Activated naive CD4-positive, alpha-beta T cell treated with anti-CD3 and anti-CD28 coated beads for 36 hours (primary cell): ENCODE measurements at regions of chr10 and their contacts with region 1.

Region 1: DNA sequence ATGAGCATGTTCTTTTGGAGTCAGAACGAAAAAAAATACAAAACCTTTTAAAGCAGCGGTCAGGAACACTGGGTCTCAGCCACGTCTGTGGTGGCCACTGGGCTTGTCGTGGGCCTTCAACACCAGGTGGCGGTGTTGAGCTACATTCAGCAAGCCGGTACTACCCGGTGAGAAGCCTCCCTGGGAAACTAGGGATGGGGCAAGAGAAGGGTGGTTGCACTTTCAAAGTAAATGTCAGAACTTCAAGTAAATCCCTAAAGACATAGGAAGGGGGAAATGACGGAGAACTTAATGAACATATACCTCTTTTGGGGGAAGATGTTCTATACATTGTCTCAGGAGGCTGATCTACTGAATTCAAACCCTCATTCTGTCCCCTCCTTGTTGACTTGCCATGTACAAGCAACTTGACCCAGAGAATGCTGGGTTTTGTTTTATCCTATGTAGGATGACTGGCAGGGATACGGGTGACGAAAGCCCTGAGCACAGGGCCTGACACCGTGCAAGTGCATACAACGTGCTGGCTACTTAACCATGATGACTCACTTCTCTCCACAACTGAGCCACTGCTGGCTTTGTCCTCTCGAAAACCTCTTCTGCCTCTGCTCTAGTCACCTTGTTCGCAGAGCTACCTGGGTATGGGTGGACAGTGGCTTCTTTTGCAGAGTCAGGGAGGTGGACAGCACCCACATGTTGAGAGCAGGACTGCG is 49.0 kb upstream of the BAMBI start:
- DNase-seq: peak; percentile 83
- H3K4me3 Mint-ChIP-seq: no peak overlapping the region
- H3K27ac Mint-ChIP-seq: no peak overlapping the region
- H3K4me1 Mint-ChIP-seq: peaks cover 4% of the 10 kb centered on the region
- H3K27me3 Mint-ChIP-seq: peaks cover 10% of the 10 kb centered on the region

Region 2: DNA sequence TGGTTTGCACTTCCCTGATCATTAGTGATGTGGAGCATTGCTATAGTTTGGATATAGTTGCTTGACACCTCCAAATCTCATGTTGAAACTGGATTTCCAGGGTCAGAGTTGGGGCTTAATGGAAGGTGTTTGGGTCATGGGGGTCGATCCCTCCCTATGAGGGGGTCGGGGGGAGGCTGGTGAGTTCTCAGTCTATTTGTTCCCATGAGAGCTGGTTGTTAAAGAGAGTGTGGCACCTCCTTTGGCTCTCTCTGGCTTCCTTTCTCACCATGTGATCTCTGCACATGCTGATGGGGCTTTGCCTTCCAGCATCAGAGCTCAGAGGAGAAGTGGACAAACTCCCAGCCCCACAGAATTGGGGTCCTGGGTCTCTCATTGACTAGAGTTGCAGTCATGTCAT is 12.2 kb after region 1 on chr10:
- CTCF ChIA-PET with region 1: interaction called, 12 read pairs
- intact Hi-C with region 1: no loop called
- DNase-seq: no peak
- H3K4me3 Mint-ChIP-seq: no peak overlapping the region
- H3K27ac Mint-ChIP-seq: no peak overlapping the region
- H3K4me1 Mint-ChIP-seq: no peaks in the 10 kb centered on the region
- H3K27me3 Mint-ChIP-seq: no peaks in the 10 kb centered on the region

Region 3: GRCh38 chr10:29304264-29305030 is 676.1 kb after region 1 on chr10:
- CTCF ChIA-PET with region 1: interaction called, 3 read pairs
- intact Hi-C with region 1: loop called (anchors 1 kb)
- DNase-seq: peak; percentile 53
- H3K4me3 Mint-ChIP-seq: peak overlapping the region; percentile 16
- H3K27ac Mint-ChIP-seq: no peak overlapping the region
- H3K4me1 Mint-ChIP-seq: peaks cover 4% of the 10 kb centered on the region
- H3K27me3 Mint-ChIP-seq: peaks cover 33% of the 10 kb centered on the region